Activated CD8-positive, alpha-beta T cell treated with anti-CD3 and anti-CD28 coated beads for 36 hours (primary cell): ENCODE measurements at regions of chr10 and their contacts with region 1.

Region 1: GRCh38 chr10:6580279-6581029 is 378 bp upstream of the PRKCQ start:
- DNase-seq: peak; percentile 87
- ATAC-seq: peak; percentile 56
- H3K4me3 Mint-ChIP-seq: peak overlapping the region; percentile 98
- H3K27ac Mint-ChIP-seq: peak overlapping the region; percentile 98
- H3K4me1 Mint-ChIP-seq: peaks cover 41% of the 10 kb centered on the region
- H3K27me3 Mint-ChIP-seq: no peaks in the 10 kb centered on the region
- CTCF ChIP-seq: peak; percentile 40

Region 2: DNA sequence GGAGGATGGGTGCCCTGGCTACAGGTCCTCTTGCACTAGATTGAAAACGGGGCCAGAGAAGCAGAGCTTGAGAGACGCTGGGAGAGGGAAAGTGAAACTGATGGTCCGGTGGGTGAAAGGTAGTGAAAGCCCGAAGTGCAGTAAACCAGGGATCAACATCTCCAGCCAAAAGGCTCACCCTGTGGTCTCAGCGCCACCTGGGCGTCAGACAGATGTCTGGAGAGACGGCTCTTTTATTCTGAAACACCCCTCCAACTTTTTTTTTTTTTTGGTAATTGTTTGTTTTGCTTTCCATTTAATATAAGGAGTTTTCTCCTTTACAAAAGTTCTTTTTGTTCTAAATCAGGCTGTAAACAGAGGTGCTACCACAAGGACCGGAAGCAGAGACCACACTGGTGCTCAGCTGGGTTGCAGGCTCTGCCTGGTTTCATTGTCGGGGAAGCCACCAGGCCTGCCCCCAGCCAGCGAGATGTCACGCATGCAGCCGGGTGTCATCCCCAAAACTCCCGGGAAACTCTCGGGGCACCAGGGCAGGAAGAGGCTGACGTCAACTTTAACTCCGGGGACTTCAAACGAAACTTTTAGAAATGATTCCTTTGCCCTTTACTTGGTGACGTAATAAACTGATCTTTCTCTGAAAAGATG is 529.5 kb before region 1 on chr10:
- CTCF ChIA-PET with region 1: no interaction called
- POLR2A ChIA-PET with region 1: no interaction called
- intact Hi-C with region 1: loop called (anchors 10 kb)
- DNase-seq: peak; percentile 98
- ATAC-seq: peak; percentile 41
- H3K4me3 Mint-ChIP-seq: peak overlapping the region; percentile 76
- H3K27ac Mint-ChIP-seq: peak overlapping the region; percentile 91
- H3K4me1 Mint-ChIP-seq: peaks cover 84% of the 10 kb centered on the region
- H3K27me3 Mint-ChIP-seq: no peaks in the 10 kb centered on the region
- CTCF ChIP-seq: no peak

Region 3: DNA sequence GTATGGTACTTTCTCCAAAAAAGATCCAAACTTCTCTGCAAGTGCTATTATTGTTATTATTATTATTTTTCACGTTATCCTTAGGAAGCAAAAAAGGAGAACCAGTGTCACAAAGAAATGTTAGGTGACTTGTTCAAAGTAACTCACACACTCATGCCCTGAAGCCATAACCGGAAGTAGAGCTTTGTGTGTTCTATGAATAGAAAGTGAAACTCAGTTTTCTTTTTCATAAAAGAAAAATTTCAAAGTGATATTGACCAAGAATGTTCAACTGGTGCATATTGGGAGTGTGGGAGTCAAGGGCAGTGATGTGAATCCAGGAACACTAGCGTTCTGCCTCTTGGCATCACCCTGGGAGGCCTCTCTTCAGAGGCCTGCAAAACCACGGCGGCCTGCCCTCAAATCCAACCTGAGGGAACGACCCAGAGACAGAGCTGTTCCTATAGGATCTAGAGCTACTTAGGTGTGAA is 106.5 kb before region 1 on chr10:
- CTCF ChIA-PET with region 1: interaction called, 4 read pairs
- POLR2A ChIA-PET with region 1: interaction called, 15 read pairs
- intact Hi-C with region 1: loop called (anchors 5 kb)
- DNase-seq: peak; percentile 49
- ATAC-seq: peak; percentile 82
- H3K4me3 Mint-ChIP-seq: peak overlapping the region; percentile 80
- H3K27ac Mint-ChIP-seq: peak overlapping the region; percentile 96
- H3K4me1 Mint-ChIP-seq: peaks cover 67% of the 10 kb centered on the region
- H3K27me3 Mint-ChIP-seq: no peaks in the 10 kb centered on the region
- CTCF ChIP-seq: no peak

Region 4: GRCh38 chr10:6542999-6543430 is 37.4 kb before region 1 on chr10:
- CTCF ChIA-PET with region 1: interaction called, 24 read pairs
- POLR2A ChIA-PET with region 1: interaction called, 7 read pairs
- intact Hi-C with region 1: loop called (anchors 5 kb)
- DNase-seq: peak; percentile 58
- ATAC-seq: peak; percentile 67
- H3K4me3 Mint-ChIP-seq: peak overlapping the region; percentile 82
- H3K27ac Mint-ChIP-seq: peak overlapping the region; percentile 100
- H3K4me1 Mint-ChIP-seq: peaks cover 70% of the 10 kb centered on the region
- H3K27me3 Mint-ChIP-seq: no peaks in the 10 kb centered on the region
- CTCF ChIP-seq: no peak

Region 5: GRCh38 chr10:6603142-6604125 is 23.0 kb after region 1 on chr10:
- CTCF ChIA-PET with region 1: interaction called, 23 read pairs
- POLR2A ChIA-PET with region 1: interaction called, 9 read pairs
- intact Hi-C with region 1: loop called (anchors 2 kb)
- DNase-seq: no peak
- ATAC-seq: no peak
- H3K4me3 Mint-ChIP-seq: no peak overlapping the region
- H3K27ac Mint-ChIP-seq: peak overlapping the region; percentile 43
- H3K4me1 Mint-ChIP-seq: peaks cover 74% of the 10 kb centered on the region
- H3K27me3 Mint-ChIP-seq: no peaks in the 10 kb centered on the region
- CTCF ChIP-seq: no peak

Region 6: GRCh38 chr10:6667679-6668270 is 87.3 kb after region 1 on chr10:
- CTCF ChIA-PET with region 1: interaction called, 45 read pairs
- POLR2A ChIA-PET with region 1: interaction called, 6 read pairs
- intact Hi-C with region 1: loop called (anchors 2 kb)
- DNase-seq: peak; percentile 74
- ATAC-seq: peak; percentile 38
- H3K4me3 Mint-ChIP-seq: no peak overlapping the region
- H3K27ac Mint-ChIP-seq: no peak overlapping the region
- H3K4me1 Mint-ChIP-seq: peaks cover 24% of the 10 kb centered on the region
- H3K27me3 Mint-ChIP-seq: no peaks in the 10 kb centered on the region
- CTCF ChIP-seq: peak; percentile 88